ENCODE measurements at regions of chr2 and their contacts with region 1.

Region 1: DNA sequence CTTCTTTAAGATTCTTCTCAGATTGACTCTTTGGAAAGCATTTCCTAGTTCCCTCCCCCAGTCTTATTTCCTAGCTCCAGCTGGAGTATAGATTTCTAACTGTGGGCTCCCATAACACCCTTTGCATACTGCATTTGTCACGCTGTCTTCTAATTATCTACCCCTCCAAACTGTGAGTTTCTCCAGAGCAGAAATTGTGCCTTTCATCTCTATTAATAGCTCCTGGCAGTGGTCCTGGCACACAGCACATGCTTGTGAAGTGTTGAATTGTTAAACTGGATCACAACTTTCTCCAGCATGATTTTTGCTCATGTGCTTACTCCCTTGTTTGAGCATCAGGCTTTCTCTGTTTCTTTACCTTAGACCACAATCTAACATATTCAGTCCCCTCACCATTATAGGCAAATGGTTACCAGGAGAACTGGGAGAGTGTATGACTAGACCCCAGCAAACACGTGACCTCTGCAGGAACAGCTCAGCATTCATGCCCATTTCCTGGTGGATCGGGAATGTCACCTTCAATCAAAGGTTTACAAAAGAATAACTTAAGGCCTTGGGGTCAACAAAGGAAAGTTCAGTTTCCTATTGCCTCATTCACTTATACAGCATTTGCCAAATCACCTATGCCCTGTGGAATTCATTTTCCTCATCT is 175.7 kb upstream of the TANK start:
- DNase-seq: peak in 1 of 2 donors; percentile 76
- ATAC-seq: peak; percentile 85 to 97 (median 91)
- H3K4me3 ChIP-seq: no peak overlapping the region
- H3K27ac ChIP-seq: peak overlapping the region in 9 of 10 donors; percentile 11 to 80 (median 59)
- H3K4me1 ChIP-seq: peaks cover 0 to 20% (median 15%) of the 10 kb centered on the region in 9 donors
- H3K27me3 ChIP-seq: no peaks in the 10 kb centered on the region
- CTCF ChIP-seq: no peak

Region 2: GRCh38 chr2:160437273-160437672 is 547.3 kb before region 1 on chr2:
- intact Hi-C with region 1: loop called in 2 of 10 experiments (anchors 5 to 10 kb)
- DNase-seq: no peak
- ATAC-seq: no peak
- H3K4me3 ChIP-seq: no peak overlapping the region
- H3K27ac ChIP-seq: no peak overlapping the region
- H3K4me1 ChIP-seq: peaks cover 6 to 58% (median 37%) of the 10 kb centered on the region in 9 donors
- H3K27me3 ChIP-seq: no peaks in the 10 kb centered on the region
- CTCF ChIP-seq: no peak

Region 3: GRCh38 chr2:160505256-160505655 is 479.3 kb before region 1 on chr2:
- intact Hi-C with region 1: loop called in 1 of 10 experiments (anchors 5 kb)
- DNase-seq: peak in 1 of 2 donors; percentile 52
- ATAC-seq: peak in 7 of 8 donors; percentile 61 to 98 (median 86)
- H3K4me3 ChIP-seq: no peak overlapping the region
- H3K27ac ChIP-seq: peak overlapping the region in 4 of 10 donors; percentile 48 to 57 (median 52)
- H3K4me1 ChIP-seq: peaks cover 0 to 26% (median 11%) of the 10 kb centered on the region in 9 donors
- H3K27me3 ChIP-seq: no peaks in the 10 kb centered on the region
- CTCF ChIP-seq: no peak

Region 4: DNA sequence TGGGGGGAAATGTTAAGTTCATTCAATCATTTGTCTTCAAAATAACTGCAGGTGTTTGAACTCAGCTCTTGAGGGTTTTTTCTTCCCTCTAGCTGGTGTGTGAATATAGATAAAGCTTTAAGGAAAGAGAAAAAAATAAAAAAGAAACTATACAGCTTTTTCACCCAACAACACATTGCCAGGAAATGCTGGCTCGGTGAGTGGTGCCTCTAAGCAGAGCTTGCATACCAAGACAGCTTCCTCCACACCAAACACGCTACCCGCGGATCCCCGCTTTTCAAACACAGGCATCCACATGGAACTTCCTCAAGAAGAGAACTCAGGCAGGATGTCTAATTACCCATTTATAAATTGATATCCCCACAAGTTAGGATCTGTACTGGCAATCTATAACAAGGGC is 105.9 kb after region 1 on chr2:
- intact Hi-C with region 1: no loop called
- DNase-seq: no peak
- ATAC-seq: no peak
- H3K4me3 ChIP-seq: no peak overlapping the region
- H3K27ac ChIP-seq: no peak overlapping the region
- H3K4me1 ChIP-seq: peaks cover 0 to 13% (median 0%) of the 10 kb centered on the region in 9 donors
- H3K27me3 ChIP-seq: no peaks in the 10 kb centered on the region
- CTCF ChIP-seq: no peak

Measured in heart right ventricle (tissue), 16 donors.